Activated naive CD4-positive, alpha-beta T cell treated with anti-CD3 and anti-CD28 coated beads for 36 hours (primary cell): ENCODE measurements at regions of chr6 and their contacts with region 1.

Region 1: DNA sequence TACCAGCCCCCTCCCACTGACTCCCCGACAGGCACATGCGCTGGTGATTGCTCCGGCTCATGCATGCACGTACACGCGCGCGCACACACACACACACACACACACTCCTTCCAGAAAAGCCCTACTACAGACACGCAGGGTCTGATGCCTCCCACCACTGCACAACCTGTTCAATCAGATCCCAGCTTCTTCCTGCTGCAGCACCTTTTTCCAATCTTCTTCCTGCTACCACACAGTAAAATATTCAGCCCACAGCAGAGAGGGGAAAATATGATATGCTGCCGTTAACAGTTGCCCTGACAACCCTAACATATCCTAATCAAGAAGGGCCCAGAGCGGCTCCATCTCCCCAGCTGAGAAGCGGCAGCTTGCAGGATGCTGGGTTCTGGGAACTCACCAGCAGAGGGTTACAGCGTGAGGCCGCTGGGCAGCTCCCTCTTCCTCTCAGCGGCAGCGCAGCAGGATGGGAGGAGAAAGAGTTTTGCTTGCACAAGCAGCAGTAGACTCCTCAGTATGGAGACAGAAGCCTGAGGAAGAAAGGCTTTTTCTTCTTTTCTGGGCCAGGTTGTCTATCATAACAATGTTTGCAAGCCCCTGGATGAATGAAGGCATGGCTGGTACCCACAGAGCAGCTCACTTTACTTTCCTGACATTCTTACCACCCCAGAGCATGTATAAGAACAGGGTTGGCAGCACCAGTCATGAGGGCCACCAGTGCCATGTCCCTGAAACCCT is 23.9 kb downstream of the MAP7 start:
- DNase-seq: peak; percentile 73
- H3K4me3 Mint-ChIP-seq: peak overlapping the region; percentile 61
- H3K27ac Mint-ChIP-seq: peak overlapping the region; percentile 44
- H3K4me1 Mint-ChIP-seq: peaks cover 23% of the 10 kb centered on the region
- H3K27me3 Mint-ChIP-seq: peaks cover 10% of the 10 kb centered on the region

Region 2: DNA sequence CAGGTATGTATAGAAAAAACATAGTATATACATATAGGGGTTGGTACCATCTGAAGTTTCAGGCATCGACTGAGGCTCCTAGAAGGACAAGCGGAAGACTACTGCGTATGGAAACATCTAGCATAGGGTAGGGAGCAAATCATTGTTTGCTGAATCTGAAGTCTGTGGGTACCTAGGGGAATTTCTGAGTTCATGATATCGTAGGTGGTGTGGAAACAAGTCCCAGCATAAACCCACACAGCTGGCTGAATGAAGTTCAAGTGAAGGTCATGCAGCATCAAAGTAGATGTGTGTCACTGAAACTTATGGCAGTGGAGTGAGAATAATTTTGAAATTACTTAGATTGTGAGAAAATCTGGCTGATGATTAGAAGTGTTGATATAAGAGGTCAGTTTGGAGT is 15.6 kb before region 1 on chr6:
- CTCF ChIA-PET with region 1: interaction called, 5 read pairs
- intact Hi-C with region 1: loop called (anchors 2 kb)
- DNase-seq: peak; percentile 40
- H3K4me3 Mint-ChIP-seq: no peak overlapping the region
- H3K27ac Mint-ChIP-seq: peak overlapping the region; percentile 25
- H3K4me1 Mint-ChIP-seq: peaks cover 22% of the 10 kb centered on the region
- H3K27me3 Mint-ChIP-seq: no peaks in the 10 kb centered on the region